Activated naive CD4-positive, alpha-beta T cell treated with anti-CD3 and anti-CD28 coated beads for 36 hours (primary cell): ENCODE measurements at regions of chr12 and their contacts with region 1.

Region 1: GRCh38 chr12:57182921-57183790 is 33.4 kb upstream of the NXPH4 start:
- DNase-seq: peak; percentile 90
- H3K4me3 Mint-ChIP-seq: no peak overlapping the region
- H3K27ac Mint-ChIP-seq: no peak overlapping the region
- H3K4me1 Mint-ChIP-seq: no peaks in the 10 kb centered on the region
- H3K27me3 Mint-ChIP-seq: no peaks in the 10 kb centered on the region

Region 2: GRCh38 chr12:56413392-56413791 is 769.8 kb before region 1 on chr12:
- CTCF ChIA-PET with region 1: no interaction called
- intact Hi-C with region 1: no loop called
- DNase-seq: no peak
- H3K4me3 Mint-ChIP-seq: no peak overlapping the region
- H3K27ac Mint-ChIP-seq: no peak overlapping the region
- H3K4me1 Mint-ChIP-seq: no peaks in the 10 kb centered on the region
- H3K27me3 Mint-ChIP-seq: no peaks in the 10 kb centered on the region

Region 3: DNA sequence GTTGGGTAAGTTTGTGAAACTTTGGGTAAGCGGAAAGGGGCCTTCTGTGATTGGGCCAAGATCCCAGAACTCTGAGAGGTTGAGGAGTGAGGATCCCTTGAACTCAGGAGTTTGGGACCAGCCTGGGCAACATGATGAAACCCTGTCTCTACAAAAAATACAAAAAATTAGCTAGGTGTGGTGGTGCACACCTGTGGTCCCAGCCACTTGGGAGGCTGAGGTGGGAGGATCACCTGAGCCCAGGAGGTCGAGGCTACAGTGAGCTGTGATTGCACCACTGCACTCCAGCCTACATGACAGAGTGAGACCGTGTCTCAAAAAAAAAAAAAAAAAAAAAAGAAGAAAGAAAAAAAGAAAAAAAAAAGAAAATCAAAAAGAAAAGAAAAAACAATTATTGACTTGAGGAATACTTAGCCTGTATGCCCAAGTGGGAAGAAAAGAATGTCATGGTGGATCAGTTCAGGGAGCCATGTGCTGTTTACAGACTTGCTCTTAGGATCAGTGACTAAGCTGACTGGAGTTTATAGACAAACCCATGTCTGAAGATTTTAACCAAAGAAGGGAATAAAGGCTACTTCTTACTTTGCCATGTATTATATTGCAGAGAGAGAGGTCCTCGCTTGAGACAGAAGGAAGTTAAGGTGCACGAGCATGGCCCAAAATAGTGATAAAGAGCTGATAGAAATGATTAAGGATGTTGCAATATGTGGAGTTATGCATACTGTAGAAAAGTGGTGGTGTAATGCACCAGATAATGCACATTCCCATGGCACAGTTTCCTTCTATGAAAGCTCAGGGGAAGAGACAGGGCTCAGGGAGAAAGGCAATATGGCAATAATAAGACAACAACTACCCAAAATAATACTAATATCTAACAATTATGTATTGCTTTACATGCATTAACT is 419.2 kb before region 1 on chr12:
- CTCF ChIA-PET with region 1: no interaction called
- intact Hi-C with region 1: loop called (anchors 5 kb)
- DNase-seq: no peak
- H3K4me3 Mint-ChIP-seq: no peak overlapping the region
- H3K27ac Mint-ChIP-seq: no peak overlapping the region
- H3K4me1 Mint-ChIP-seq: no peaks in the 10 kb centered on the region
- H3K27me3 Mint-ChIP-seq: no peaks in the 10 kb centered on the region

Region 4: DNA sequence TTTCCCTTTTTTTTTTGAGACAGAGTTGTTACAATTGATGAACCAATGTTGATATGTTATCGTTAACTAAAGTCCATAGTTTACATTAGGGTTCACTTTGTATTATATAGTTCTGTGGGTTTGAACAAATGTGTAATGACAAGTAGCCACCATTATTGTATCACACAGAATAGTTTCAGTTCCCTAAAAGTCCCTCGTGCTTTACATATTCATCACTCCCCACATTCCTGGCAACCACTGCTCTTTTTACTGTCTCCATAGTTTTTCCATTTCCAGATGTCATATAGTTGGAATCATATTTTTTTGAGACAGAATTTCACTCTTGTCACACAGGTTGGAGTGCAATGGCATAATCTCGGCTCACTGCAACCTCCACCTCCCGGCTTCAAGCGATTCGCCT is 407.5 kb before region 1 on chr12:
- CTCF ChIA-PET with region 1: no interaction called
- intact Hi-C with region 1: no loop called
- DNase-seq: no peak
- H3K4me3 Mint-ChIP-seq: no peak overlapping the region
- H3K27ac Mint-ChIP-seq: no peak overlapping the region
- H3K4me1 Mint-ChIP-seq: no peaks in the 10 kb centered on the region
- H3K27me3 Mint-ChIP-seq: no peaks in the 10 kb centered on the region

Region 5: DNA sequence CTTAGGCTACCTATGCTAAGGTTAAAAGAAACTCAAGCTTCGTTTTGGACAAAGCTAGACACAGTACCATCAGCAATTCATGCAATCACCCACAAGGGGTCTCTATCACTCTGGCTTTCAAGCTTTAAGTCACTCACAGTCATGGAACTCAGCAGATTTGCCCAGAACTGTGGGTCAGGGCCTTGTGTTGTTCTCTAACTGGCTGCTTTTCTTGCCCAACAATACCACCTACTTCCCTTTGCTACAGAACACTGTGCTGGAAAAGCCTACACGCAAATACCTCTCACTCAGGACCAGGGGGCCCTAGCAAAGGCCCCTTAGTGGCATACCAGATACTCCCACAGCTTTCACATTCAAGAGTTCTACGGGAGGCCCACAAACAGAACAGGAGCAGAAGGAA is 113.6 kb before region 1 on chr12:
- CTCF ChIA-PET with region 1: interaction called, 6 read pairs
- intact Hi-C with region 1: loop called (anchors 1 kb)
- DNase-seq: peak; percentile 76
- H3K4me3 Mint-ChIP-seq: peak overlapping the region; percentile 23
- H3K27ac Mint-ChIP-seq: peak overlapping the region; percentile 93
- H3K4me1 Mint-ChIP-seq: peaks cover 71% of the 10 kb centered on the region
- H3K27me3 Mint-ChIP-seq: no peaks in the 10 kb centered on the region